Motor neuron (in vitro differentiated cells): ENCODE measurements at regions of chr2 and their contacts with region 1.

Region 1: DNA sequence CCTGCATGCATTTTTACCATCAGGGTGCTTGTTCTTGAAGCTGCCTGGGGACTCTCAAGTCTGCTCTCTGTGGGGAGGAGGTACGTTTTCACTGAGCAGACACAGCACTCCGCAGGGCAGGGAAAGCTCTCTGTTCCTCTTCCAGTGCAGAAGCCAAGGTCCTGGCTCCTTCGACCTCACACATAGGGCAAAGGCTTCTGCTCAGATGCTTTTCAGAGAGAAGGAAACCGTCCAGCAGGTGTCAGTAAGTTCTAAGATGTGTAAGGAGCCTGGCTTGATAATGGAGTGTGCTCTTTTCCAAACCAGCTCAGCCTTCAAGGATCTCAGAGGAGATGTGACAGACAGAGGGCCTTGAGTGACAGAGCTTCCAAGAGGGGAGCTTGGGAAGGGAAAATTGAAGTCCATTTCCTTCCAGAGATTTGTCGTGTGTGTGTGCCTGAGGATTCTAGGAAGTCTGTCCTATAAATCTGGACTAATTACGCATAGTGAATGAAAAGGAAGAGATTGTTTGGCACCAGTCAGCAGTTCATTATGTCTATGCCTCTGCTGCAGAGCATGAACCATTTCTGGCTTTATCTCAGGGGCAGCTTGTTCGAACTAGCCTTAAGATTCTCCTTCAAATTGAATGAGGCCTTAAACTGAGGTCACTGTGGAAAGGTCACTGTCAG is 67.3 kb upstream of the UPP2 start:
- ATAC-seq: peak; percentile 56 to 100 (median 76)
- H3K4me3 ChIP-seq: no peak overlapping the region
- H3K27ac ChIP-seq: no peak overlapping the region
- H3K4me1 ChIP-seq: no peaks in the 10 kb centered on the region

Region 2: GRCh38 chr2:158174495-158174894 is 140.2 kb after region 1 on chr2:
- in situ Hi-C with region 1: loop called in 2 of 9 experiments (anchors 25 kb)
- ATAC-seq: no peak
- H3K4me3 ChIP-seq: no peak overlapping the region
- H3K27ac ChIP-seq: no peak overlapping the region
- H3K4me1 ChIP-seq: no peaks in the 10 kb centered on the region

Region 3: DNA sequence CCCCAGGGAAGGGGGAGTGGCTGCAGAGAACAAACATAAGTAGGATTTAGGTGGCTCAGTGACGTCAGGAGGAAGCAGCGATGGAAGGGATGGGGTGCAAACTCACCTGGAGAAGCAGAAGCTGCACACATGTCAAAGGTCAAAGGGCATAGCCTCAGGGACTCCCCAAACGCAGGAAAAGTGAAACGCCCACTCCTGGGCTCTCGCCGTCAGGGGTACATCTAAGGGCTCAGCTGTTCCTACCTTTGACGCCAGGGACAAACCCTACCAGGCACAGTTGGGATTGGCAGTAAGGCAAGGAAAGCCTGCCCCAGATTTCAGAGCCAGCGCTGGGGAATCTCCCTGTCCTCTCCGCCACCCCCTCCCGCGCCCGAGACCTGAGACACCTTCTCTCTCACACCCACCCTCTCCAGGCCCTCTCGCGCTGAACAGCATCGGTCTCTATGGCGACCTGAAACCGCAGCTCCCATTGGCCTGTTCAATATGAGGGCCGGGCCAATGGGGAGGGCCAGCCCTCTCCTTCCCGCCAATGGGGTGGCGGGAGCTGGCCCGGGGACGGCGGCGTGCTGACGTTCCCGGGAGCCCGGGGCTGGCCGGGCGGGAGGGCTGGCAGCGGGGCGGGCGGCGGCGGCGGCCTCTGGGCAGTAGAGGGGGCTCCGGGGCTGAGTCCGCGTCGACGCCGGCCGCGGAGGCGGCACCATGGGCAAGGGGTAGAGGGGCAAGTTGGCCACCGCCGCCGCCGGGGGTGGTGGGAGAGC is 422.2 kb after region 1 on chr2 and contains the starts of genes CCDC148 and PKP4:
- in situ Hi-C with region 1: loop called in 2 of 9 experiments (anchors 25 kb)
- ATAC-seq: peak; percentile 76 to 89 (median 86)
- H3K4me3 ChIP-seq: peak within 1 kb of the TSS; percentile 67 to 89 (median 83)
- H3K27ac ChIP-seq: peak within 1 kb of the TSS; percentile 53 to 73
- H3K4me1 ChIP-seq: peaks cover 0 to 15% of the 10 kb centered on the region in 2 donors
- total RNA-seq, gene CCDC148: 0.45 to 7.0 (median 1.5) TPM
- total RNA-seq, gene PKP4: 17.8 to 43.0 (median 29.1) TPM

Region 4: GRCh38 chr2:158507166-158507565 is 472.8 kb after region 1 on chr2:
- in situ Hi-C with region 1: no loop called
- ATAC-seq: peak in 1 of 8 experiments; percentile 80
- H3K4me3 ChIP-seq: no peak overlapping the region
- H3K27ac ChIP-seq: no peak overlapping the region
- H3K4me1 ChIP-seq: no peaks in the 10 kb centered on the region

Region 5: DNA sequence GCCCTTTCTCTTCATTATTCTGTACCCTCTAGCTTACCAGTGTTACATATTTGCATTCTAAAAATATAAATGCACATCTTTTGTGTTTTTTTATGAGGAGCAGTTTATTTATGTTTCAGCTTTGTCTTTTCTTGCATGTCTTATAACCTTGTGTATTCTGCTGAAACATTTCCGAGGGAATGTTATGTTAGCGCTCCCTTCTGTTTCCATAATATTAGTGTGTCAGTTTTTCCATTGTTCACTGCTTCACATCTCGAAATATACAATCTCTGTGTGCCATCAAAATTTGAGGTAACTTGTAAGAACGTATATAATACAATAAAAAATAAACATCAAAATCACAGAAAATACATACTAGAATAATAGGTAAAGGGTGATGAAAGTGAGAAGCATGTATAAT is 575.7 kb after region 1 on chr2:
- in situ Hi-C with region 1: no loop called
- ATAC-seq: peak in 1 of 8 experiments; percentile 85
- H3K4me3 ChIP-seq: no peak overlapping the region
- H3K27ac ChIP-seq: no peak overlapping the region
- H3K4me1 ChIP-seq: no peaks in the 10 kb centered on the region

Region 6: GRCh38 chr2:158745044-158745865 is 710.9 kb after region 1 on chr2:
- in situ Hi-C with region 1: loop called in 7 of 9 experiments (anchors 10 to 25 kb)
- ATAC-seq: peak; percentile 64 to 91 (median 89)
- H3K4me3 ChIP-seq: peak overlapping the region in 1 of 5 donors; percentile 11
- H3K27ac ChIP-seq: no peak overlapping the region
- H3K4me1 ChIP-seq: peaks cover under 1 to 5% of the 10 kb centered on the region in 2 donors

Region 7: GRCh38 chr2:158753641-158754611 is 719.6 kb after region 1 on chr2:
- in situ Hi-C with region 1: loop called in 7 of 9 experiments (anchors 10 to 25 kb)
- ATAC-seq: peak; percentile 67 to 99 (median 82)
- H3K4me3 ChIP-seq: no peak overlapping the region
- H3K27ac ChIP-seq: no peak overlapping the region
- H3K4me1 ChIP-seq: peaks cover 6 to 8% of the 10 kb centered on the region in 2 donors